Activated B cell treated with CpG ODN at 0.5 μM for 24 hours (primary cell): ENCODE measurements at regions of chr2 and their contacts with region 1.

Region 1: GRCh38 chr2:85327822-85328617 is at the start of gene TGOLN2:
- DNase-seq: peak; percentile 91
- ATAC-seq: peak; percentile 90
- H3K4me3 Mint-ChIP-seq: peak within 1 kb of the TSS; percentile 99
- H3K27ac Mint-ChIP-seq: peak within 1 kb of the TSS; percentile 100
- H3K4me1 Mint-ChIP-seq: peaks cover 61% of the 10 kb centered on the region
- H3K27me3 Mint-ChIP-seq: no peaks in the 10 kb centered on the region
- CTCF ChIP-seq: no peak
- total RNA-seq, gene TGOLN2: 103 and 119 TPM in 2 replicates

Region 2: GRCh38 chr2:84919885-84920580 is 408.0 kb before region 1 on chr2:
- CTCF ChIA-PET with region 1: no interaction called
- POLR2A ChIA-PET with region 1: interaction called, 14 read pairs
- intact Hi-C with region 1: no loop called
- DNase-seq: no peak
- ATAC-seq: peak; percentile 59
- H3K4me3 Mint-ChIP-seq: peak overlapping the region; percentile 73
- H3K27ac Mint-ChIP-seq: peak overlapping the region; percentile 96
- H3K4me1 Mint-ChIP-seq: peaks cover 63% of the 10 kb centered on the region
- H3K27me3 Mint-ChIP-seq: no peaks in the 10 kb centered on the region
- CTCF ChIP-seq: no peak

Region 3: GRCh38 chr2:85181134-85181631 is 146.8 kb before region 1 on chr2:
- CTCF ChIA-PET with region 1: no interaction called
- POLR2A ChIA-PET with region 1: no interaction called
- intact Hi-C with region 1: no loop called
- DNase-seq: no peak
- ATAC-seq: no peak
- H3K4me3 Mint-ChIP-seq: no peak overlapping the region
- H3K27ac Mint-ChIP-seq: no peak overlapping the region
- H3K4me1 Mint-ChIP-seq: no peaks in the 10 kb centered on the region
- H3K27me3 Mint-ChIP-seq: peaks cover 12% of the 10 kb centered on the region
- CTCF ChIP-seq: no peak

Region 4: GRCh38 chr2:85340034-85340892 is 12.2 kb after region 1 on chr2:
- CTCF ChIA-PET with region 1: no interaction called
- POLR2A ChIA-PET with region 1: interaction called, 15 read pairs
- intact Hi-C with region 1: no loop called
- DNase-seq: no peak
- ATAC-seq: no peak
- H3K4me3 Mint-ChIP-seq: no peak overlapping the region
- H3K27ac Mint-ChIP-seq: no peak overlapping the region
- H3K4me1 Mint-ChIP-seq: no peaks in the 10 kb centered on the region
- H3K27me3 Mint-ChIP-seq: no peaks in the 10 kb centered on the region
- CTCF ChIP-seq: no peak

Region 5: GRCh38 chr2:85420536-85421259 is 92.7 kb after region 1 on chr2:
- CTCF ChIA-PET with region 1: no interaction called
- POLR2A ChIA-PET with region 1: interaction called, 30 read pairs
- intact Hi-C with region 1: loop called (anchors 1 kb)
- DNase-seq: peak; percentile 95
- ATAC-seq: peak; percentile 76
- H3K4me3 Mint-ChIP-seq: peak overlapping the region; percentile 78
- H3K27ac Mint-ChIP-seq: peak overlapping the region; percentile 80
- H3K4me1 Mint-ChIP-seq: peaks cover 25% of the 10 kb centered on the region
- H3K27me3 Mint-ChIP-seq: no peaks in the 10 kb centered on the region
- CTCF ChIP-seq: peak; percentile 90

Region 6: DNA sequence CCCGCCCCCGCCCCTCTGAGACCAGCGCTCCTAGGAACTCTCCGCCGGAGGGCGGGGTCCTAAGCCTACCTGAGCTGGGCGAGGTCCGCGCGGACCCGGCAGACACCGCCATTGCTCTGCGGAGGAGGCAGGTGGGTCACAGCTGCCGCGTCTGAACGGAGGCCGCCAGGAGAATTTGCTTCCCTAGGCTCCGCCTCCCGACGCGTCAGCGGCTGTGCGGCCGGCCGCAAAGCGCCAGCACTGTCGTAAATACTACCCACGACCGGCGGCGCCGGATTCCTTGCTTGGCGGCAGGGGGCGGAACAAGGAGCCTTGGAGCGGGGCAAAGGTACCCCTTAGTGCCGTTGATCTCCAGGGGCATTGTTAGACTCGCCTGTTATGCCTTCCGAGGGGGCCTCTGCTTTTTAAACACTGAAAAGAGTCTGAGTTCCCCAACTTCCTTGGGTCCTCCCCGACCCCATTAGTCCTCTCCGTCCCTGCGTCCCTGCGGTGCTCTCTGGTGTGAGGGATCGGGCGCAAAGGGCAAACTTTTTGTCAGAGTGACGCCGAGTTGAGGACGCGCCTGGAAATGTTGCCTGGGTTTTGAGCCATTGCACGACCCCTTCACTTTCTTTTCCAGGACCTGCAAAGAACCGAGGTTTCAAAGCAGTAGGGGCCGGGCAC is 233.4 kb after region 1 on chr2 and contains the start of gene GGCX:
- CTCF ChIA-PET with region 1: no interaction called
- POLR2A ChIA-PET with region 1: interaction called, 15 read pairs
- intact Hi-C with region 1: loop called (anchors 2 kb)
- DNase-seq: peak; percentile 84
- ATAC-seq: peak; percentile 88
- H3K4me3 Mint-ChIP-seq: peak within 1 kb of the TSS; percentile 98
- H3K27ac Mint-ChIP-seq: peak within 1 kb of the TSS; percentile 98
- H3K4me1 Mint-ChIP-seq: peaks cover 38% of the 10 kb centered on the region
- H3K27me3 Mint-ChIP-seq: no peaks in the 10 kb centered on the region
- CTCF ChIP-seq: no peak
- total RNA-seq, gene GGCX: 30.0 and 30.7 TPM in 2 replicates

Region 7: DNA sequence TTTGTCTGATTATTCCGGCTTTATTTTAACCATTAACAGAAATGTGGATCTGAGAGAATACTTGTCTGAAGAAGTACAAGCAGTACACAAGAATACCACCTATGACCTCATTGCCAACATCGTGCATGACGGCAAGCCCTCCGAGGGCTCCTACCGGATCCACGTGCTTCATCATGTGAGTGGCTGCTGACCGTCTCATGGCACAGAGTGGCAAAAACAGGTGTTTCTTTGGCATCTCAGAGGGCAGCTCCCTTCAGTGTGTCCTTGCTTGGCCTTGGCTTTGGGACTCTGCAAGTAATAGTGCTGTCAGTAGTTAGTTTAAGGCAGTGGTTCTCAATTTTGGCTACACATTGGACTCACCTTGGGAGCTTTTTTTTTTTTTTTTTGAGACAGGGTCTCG is 316.9 kb after region 1 on chr2:
- CTCF ChIA-PET with region 1: no interaction called
- POLR2A ChIA-PET with region 1: no interaction called
- intact Hi-C with region 1: no loop called
- DNase-seq: no peak
- ATAC-seq: no peak
- H3K4me3 Mint-ChIP-seq: no peak overlapping the region
- H3K27ac Mint-ChIP-seq: no peak overlapping the region
- H3K4me1 Mint-ChIP-seq: peaks cover 24% of the 10 kb centered on the region
- H3K27me3 Mint-ChIP-seq: no peaks in the 10 kb centered on the region
- CTCF ChIP-seq: no peak

Region 8: GRCh38 chr2:86195055-86195807 is 867.2 kb after region 1 on chr2 and contains the start of gene IMMT:
- CTCF ChIA-PET with region 1: no interaction called
- POLR2A ChIA-PET with region 1: interaction called, 6 read pairs
- intact Hi-C with region 1: loop called (anchors 5 kb)
- DNase-seq: peak; percentile 86
- ATAC-seq: peak; percentile 91
- H3K4me3 Mint-ChIP-seq: peak within 1 kb of the TSS; percentile 91
- H3K27ac Mint-ChIP-seq: peak within 1 kb of the TSS; percentile 90
- H3K4me1 Mint-ChIP-seq: peaks cover 59% of the 10 kb centered on the region
- H3K27me3 Mint-ChIP-seq: no peaks in the 10 kb centered on the region
- CTCF ChIP-seq: no peak
- total RNA-seq, gene IMMT: 90.3 and 93.0 TPM in 2 replicates